ENCODE measurements at regions of chr6 and their contacts with region 1.

Region 1: GRCh38 chr6:11366183-11366933 is 133.9 kb upstream of the NEDD9 start:
- DNase-seq: peak; percentile 72
- ATAC-seq: peak; percentile 65
- H3K4me3 Mint-ChIP-seq: peak overlapping the region; percentile 37
- H3K27ac Mint-ChIP-seq: peak overlapping the region; percentile 81
- H3K4me1 Mint-ChIP-seq: peaks cover 95% of the 10 kb centered on the region
- H3K27me3 Mint-ChIP-seq: no peaks in the 10 kb centered on the region

Region 2: GRCh38 chr6:10837995-10838793 is 528.2 kb before region 1 on chr6 and contains the start of gene MAK:
- CTCF ChIA-PET with region 1: no interaction called
- POLR2A ChIA-PET with region 1: no interaction called
- intact Hi-C with region 1: loop called in 1 of 2 experiments (anchors 1 kb)
- DNase-seq: peak; percentile 91
- ATAC-seq: peak; percentile 89
- H3K4me3 Mint-ChIP-seq: peak within 1 kb of the TSS; percentile 70
- H3K27ac Mint-ChIP-seq: peak within 1 kb of the TSS; percentile 96
- H3K4me1 Mint-ChIP-seq: peaks cover 22% of the 10 kb centered on the region
- H3K27me3 Mint-ChIP-seq: peaks cover 48% of the 10 kb centered on the region
- total RNA-seq, gene MAK: 0.42 to 0.43 TPM

Region 3: GRCh38 chr6:10886691-10887535 is 479.4 kb before region 1 on chr6 and contains the start of gene SYCP2L:
- CTCF ChIA-PET with region 1: no interaction called
- POLR2A ChIA-PET with region 1: no interaction called
- intact Hi-C with region 1: no loop called
- DNase-seq: peak; percentile 67
- ATAC-seq: peak; percentile 84
- H3K4me3 Mint-ChIP-seq: peak within 1 kb of the TSS; percentile 61
- H3K27ac Mint-ChIP-seq: no peak within 1 kb of the TSS
- H3K4me1 Mint-ChIP-seq: peaks cover 12% of the 10 kb centered on the region
- H3K27me3 Mint-ChIP-seq: peaks cover 66% of the 10 kb centered on the region
- total RNA-seq, gene SYCP2L: 0.25 TPM in 1 of 2 experiments, not detected in the other

Region 4: GRCh38 chr6:11232193-11232769 is 134.1 kb before region 1 on chr6 and contains the start of gene NEDD9:
- CTCF ChIA-PET with region 1: interaction called, 3 read pairs
- POLR2A ChIA-PET with region 1: interaction called, 5 read pairs
- intact Hi-C with region 1: loop called (anchors 1 to 5 kb)
- DNase-seq: peak; percentile 97
- ATAC-seq: peak; percentile 96
- H3K4me3 Mint-ChIP-seq: peak within 1 kb of the TSS; percentile 81
- H3K27ac Mint-ChIP-seq: peak within 1 kb of the TSS; percentile 95
- H3K4me1 Mint-ChIP-seq: peaks cover 65% of the 10 kb centered on the region
- H3K27me3 Mint-ChIP-seq: no peaks in the 10 kb centered on the region
- total RNA-seq, gene NEDD9: 23.6 to 27.3 TPM

Region 5: GRCh38 chr6:11324453-11325015 is 41.8 kb before region 1 on chr6:
- CTCF ChIA-PET with region 1: interaction called, 3 read pairs
- POLR2A ChIA-PET with region 1: no interaction called
- intact Hi-C with region 1: loop called (anchors 1 kb)
- DNase-seq: peak; percentile 77
- ATAC-seq: peak; percentile 93
- H3K4me3 Mint-ChIP-seq: peak overlapping the region; percentile 42
- H3K27ac Mint-ChIP-seq: peak overlapping the region; percentile 86
- H3K4me1 Mint-ChIP-seq: peaks cover 68% of the 10 kb centered on the region
- H3K27me3 Mint-ChIP-seq: no peaks in the 10 kb centered on the region

Region 6: DNA sequence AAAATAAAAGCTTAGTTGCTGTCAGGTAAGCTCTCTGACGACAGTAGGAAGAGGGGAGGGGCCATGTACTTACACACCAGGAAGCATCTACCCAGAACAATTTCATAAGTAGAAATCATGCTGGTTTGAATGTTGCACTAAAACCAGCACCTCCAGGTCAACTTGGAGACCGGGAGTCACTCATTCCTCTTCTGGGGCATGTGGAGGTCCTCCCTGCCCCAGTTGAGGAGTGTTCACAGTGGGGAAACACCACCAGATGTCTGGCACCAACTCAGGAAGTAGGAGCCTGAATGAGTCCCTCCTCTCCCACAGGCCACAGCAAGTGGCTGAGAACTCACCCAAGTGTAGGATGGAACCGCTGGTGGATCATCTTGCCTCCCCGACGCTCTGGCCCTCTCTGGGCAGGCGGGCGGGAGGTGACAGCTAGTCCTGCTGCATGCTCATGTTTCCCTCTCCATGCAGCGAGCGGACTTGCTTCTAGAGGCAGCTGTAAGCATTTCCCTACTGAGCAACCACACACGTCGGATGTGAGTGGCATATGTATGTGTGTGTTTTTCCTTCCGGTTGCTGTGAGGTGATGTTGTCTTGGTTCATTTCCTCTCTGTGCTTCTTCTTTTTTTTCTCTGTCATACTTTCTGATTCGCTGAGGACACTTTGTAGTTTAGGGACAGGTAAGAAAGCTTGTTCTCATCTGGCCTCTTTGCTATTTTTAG is 15.6 kb after region 1 on chr6:
- CTCF ChIA-PET with region 1: interaction called, 12 read pairs
- POLR2A ChIA-PET with region 1: interaction called, 7 read pairs
- intact Hi-C with region 1: loop called (anchors 1 kb)
- DNase-seq: peak; percentile 80
- ATAC-seq: peak; percentile 93
- H3K4me3 Mint-ChIP-seq: peak overlapping the region; percentile 78
- H3K27ac Mint-ChIP-seq: peak overlapping the region; percentile 88
- H3K4me1 Mint-ChIP-seq: peaks cover 56% of the 10 kb centered on the region
- H3K27me3 Mint-ChIP-seq: peaks cover 2% of the 10 kb centered on the region

Region 7: GRCh38 chr6:11460001-11460668 is 93.8 kb after region 1 on chr6:
- CTCF ChIA-PET with region 1: interaction called, 5 read pairs
- POLR2A ChIA-PET with region 1: interaction called, 8 read pairs
- intact Hi-C with region 1: loop called (anchors 1 to 5 kb)
- DNase-seq: peak; percentile 19
- ATAC-seq: peak; percentile 70
- H3K4me3 Mint-ChIP-seq: peak overlapping the region; percentile 35
- H3K27ac Mint-ChIP-seq: peak overlapping the region; percentile 93
- H3K4me1 Mint-ChIP-seq: peaks cover 33% of the 10 kb centered on the region
- H3K27me3 Mint-ChIP-seq: peaks cover 4% of the 10 kb centered on the region

Region 8: GRCh38 chr6:12051861-12052368 is 685.6 kb after region 1 on chr6:
- CTCF ChIA-PET with region 1: no interaction called
- POLR2A ChIA-PET with region 1: no interaction called
- intact Hi-C with region 1: loop called in 1 of 2 experiments (anchors 10 kb)
- DNase-seq: peak; percentile 80
- ATAC-seq: peak; percentile 91
- H3K4me3 Mint-ChIP-seq: peak overlapping the region; percentile 53
- H3K27ac Mint-ChIP-seq: peak overlapping the region; percentile 94
- H3K4me1 Mint-ChIP-seq: peaks cover 76% of the 10 kb centered on the region
- H3K27me3 Mint-ChIP-seq: no peaks in the 10 kb centered on the region